Heart left ventricle (tissue), 16 donors: ENCODE measurements at regions of chr5 and their contacts with region 1.

Region 1: DNA sequence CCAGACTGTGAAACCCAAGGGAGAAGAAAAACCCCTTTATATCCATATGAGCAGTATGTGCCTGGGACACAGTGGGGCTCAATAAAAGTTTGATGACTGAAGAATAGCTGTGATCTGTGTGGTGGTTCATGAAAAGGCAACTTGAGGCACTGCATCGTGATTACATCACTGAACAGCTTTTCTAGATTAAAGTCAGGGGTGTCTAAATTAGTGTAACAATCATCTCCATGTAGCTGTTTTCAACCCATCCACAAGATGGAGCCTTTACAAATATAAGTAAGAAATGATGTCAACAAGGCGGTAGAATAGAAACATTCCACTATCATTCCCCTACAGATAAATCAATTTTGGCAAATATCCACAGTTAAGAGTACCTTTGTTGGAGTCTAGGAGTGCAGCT is 55.5 kb downstream of the PRRC1 start:
- DNase-seq: no peak
- ATAC-seq: no peak
- H3K4me3 ChIP-seq: no peak overlapping the region
- H3K27ac ChIP-seq: no peak overlapping the region
- H3K4me1 ChIP-seq: no peaks in the 10 kb centered on the region
- H3K27me3 ChIP-seq: peaks cover 0 to 11% (median 0%) of the 10 kb centered on the region in 9 donors
- CTCF ChIP-seq: peak in 4 of 12 donors; percentile 18 to 31 (median 24)
- POLR2A ChIP-seq: no peak

Region 2: GRCh38 chr5:127718181-127718580 is 145.3 kb after region 1 on chr5:
- intact Hi-C with region 1: loop called in 3 of 10 experiments (anchors 10 kb)
- DNase-seq: no peak
- ATAC-seq: no peak
- H3K4me3 ChIP-seq: no peak overlapping the region
- H3K27ac ChIP-seq: no peak overlapping the region
- H3K4me1 ChIP-seq: peaks cover 0 to 3% (median 0%) of the 10 kb centered on the region in 12 donors
- H3K27me3 ChIP-seq: no peaks in the 10 kb centered on the region
- CTCF ChIP-seq: no peak
- POLR2A ChIP-seq: no peak

Region 3: GRCh38 chr5:127746756-127747155 is 173.8 kb after region 1 on chr5:
- intact Hi-C with region 1: loop called in 6 of 10 experiments (anchors 10 kb)
- DNase-seq: no peak
- ATAC-seq: no peak
- H3K4me3 ChIP-seq: no peak overlapping the region
- H3K27ac ChIP-seq: no peak overlapping the region
- H3K4me1 ChIP-seq: no peaks in the 10 kb centered on the region
- H3K27me3 ChIP-seq: no peaks in the 10 kb centered on the region
- CTCF ChIP-seq: peak; percentile 33 to 64 (median 46)
- POLR2A ChIP-seq: no peak